K562 (cell line): ENCODE measurements at regions of chr7 and their contacts with region 1.

Region 1: GRCh38 chr7:6057316-6058129 is 26.3 kb downstream of the ANKRD61 start:
- DNase-seq: peak in 1 of 4 experiments; percentile 69
- ATAC-seq: peak; percentile 20
- H3K4me3 ChIP-seq: peak overlapping the region; percentile 86
- H3K27ac ChIP-seq: peak overlapping the region; percentile 94
- H3K4me1 ChIP-seq: peaks cover 6 to 21% of the 10 kb centered on the region in 2 experiments; a peak in 4 of 5 replicates
- H3K27me3 ChIP-seq: no peaks in the 10 kb centered on the region
- CTCF ChIP-seq: no peak
- EP300 ChIP-seq: no peak
- POLR2A ChIP-seq: no peak; the same call in 1 of the 2 replicates
- RAD21 ChIP-seq: no peak

Region 2: DNA sequence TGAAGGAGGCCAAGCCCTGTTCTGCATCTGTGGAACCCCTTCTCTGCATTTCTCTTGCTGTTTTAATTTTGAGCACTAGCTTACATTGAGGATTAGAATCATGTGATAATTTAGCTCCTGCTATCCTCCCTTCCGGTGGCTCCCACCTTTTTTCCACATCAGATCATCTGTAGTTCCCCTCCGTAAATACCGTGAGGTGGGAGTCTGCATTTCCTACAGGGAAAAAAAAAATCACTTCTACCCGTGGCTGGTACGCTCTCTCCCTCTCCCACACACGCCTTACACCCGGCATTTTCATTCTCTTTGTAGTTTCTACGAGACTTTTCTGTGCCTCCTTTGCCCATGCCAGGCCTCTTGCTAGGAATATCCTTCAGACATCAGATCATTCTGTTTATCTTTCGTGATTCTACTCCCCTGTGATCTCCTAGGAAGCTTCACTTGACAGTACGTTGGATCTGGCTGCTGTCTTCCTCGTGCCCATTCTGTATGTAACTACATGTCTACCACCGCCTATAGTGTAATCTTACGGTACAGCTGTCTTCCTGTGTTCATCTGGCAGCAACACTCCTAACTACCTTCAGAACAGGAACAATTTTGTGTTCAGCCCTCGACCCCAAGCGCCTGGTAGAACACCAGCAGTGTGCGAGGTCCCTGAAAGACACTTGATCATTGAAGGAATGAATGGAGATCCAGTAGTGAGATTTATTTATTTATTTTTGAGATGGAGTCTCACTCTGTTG is 218.6 kb before region 1 on chr7:
- CTCF ChIA-PET with region 1: no interaction called
- POLR2A ChIA-PET with region 1: no interaction called
- in situ Hi-C with region 1: no loop called
- intact Hi-C with region 1: no loop called
- DNase-seq: no peak
- ATAC-seq: peak; percentile 38
- H3K4me3 ChIP-seq: no peak overlapping the region
- H3K27ac ChIP-seq: no peak overlapping the region
- H3K4me1 ChIP-seq: peaks cover 0 to 7% of the 10 kb centered on the region in 2 experiments; a peak in 3 of 5 replicates
- H3K27me3 ChIP-seq: no peaks in the 10 kb centered on the region
- CTCF ChIP-seq: no peak
- EP300 ChIP-seq: no peak
- POLR2A ChIP-seq: no peak
- RAD21 ChIP-seq: no peak

Region 3: DNA sequence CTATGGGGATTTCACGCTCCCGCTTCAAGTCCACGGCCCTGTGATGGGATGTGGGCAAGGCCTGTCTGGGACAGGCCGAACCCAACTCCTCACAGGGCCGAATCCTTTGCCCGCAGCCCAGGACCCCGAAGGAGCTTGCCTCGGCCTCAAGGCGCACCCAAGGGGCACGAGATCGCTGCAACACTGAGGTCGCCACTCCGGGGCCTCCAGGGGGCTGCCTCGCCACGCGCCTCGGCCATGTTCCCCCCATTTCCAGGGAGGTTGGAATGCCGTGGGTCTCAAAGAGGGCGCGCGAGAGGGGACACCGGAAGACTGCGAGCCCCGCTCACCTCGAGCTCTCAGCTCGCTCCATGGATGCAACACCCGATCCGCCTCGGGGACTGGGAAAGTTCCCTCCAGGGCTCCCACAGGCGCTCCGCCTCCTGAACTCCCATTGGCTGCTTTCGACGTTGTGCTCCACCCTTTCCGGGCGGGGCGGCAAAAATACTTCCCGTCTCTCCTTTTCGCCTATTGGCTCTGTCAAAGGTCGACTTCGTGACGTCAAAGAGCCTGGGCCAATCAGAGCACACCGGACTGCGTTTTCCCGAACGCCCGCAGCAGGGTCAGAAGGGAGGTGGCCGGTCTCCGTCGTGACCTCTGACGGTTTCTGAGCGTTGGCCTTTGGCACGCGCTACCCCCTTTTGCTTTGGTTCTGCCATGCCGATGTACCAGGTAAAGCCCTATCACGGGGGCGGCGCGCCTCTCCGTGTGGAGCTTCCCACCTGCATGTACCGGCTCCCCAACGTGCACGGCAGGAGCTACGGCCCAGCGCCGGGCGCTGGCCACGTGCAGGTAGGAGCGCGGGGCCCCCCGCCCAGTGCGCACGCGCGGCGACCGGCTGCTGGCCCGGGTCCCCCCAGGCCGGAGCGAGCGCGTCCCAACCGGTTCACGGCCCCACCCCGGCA is 48.6 kb before region 1 on chr7 and contains the starts of genes AIMP2 and PMS2:
- CTCF ChIA-PET with region 1: no interaction called
- POLR2A ChIA-PET with region 1: interaction called, 8 read pairs
- in situ Hi-C with region 1: no loop called
- intact Hi-C with region 1: loop called (anchors 2 kb)
- DNase-seq: peak; percentile 94 to 98 (median 96)
- ATAC-seq: peak; percentile 92
- H3K4me3 ChIP-seq: peak within 1 kb of the TSS; percentile 65
- H3K27ac ChIP-seq: peak within 1 kb of the TSS; percentile 99
- H3K4me1 ChIP-seq: peaks cover 12 to 15% of the 10 kb centered on the region in 2 experiments; a peak in 4 of 5 replicates
- H3K27me3 ChIP-seq: no peaks in the 10 kb centered on the region
- CTCF ChIP-seq: peak; percentile 20 to 37 (median 22); a peak in 4 of 6 replicates
- EP300 ChIP-seq: no peak
- POLR2A ChIP-seq: peak; percentile 96
- RAD21 ChIP-seq: peak; percentile 27 to 29; a peak in 3 of 4 replicates
- polyA plus RNA-seq, gene AIMP2: 47.5 to 63.5 TPM
- polyA plus RNA-seq, gene PMS2: 4.9 to 6.5 TPM

Region 4: DNA sequence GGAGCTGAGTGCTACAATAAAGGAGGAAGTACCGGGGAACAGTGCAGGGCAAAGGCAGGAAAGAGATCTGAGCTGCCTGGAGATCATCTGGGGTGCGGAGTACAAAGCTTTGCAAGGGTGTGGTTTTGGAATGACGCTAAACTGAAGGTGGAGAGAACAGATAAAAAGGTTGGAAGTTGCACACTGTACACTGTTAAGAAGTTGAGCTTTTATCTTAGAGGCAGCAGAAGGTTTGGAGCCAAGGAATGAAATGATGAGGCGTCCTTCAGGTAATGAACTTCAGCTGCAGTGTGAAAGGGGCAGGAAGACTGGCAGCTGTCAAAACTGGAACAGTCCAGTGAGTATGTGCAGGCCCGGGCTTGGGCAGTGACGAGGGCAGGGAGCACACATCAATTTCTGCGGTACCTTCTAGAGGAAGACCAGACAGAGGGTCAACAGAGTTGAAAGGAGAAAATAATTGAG is 33.5 kb before region 1 on chr7:
- CTCF ChIA-PET with region 1: no interaction called
- POLR2A ChIA-PET with region 1: interaction called, 15 read pairs
- in situ Hi-C with region 1: no loop called
- intact Hi-C with region 1: loop called (anchors 1 kb)
- DNase-seq: peak; percentile 43 to 93 (median 64)
- ATAC-seq: peak; percentile 86
- H3K4me3 ChIP-seq: no peak overlapping the region
- H3K27ac ChIP-seq: peak overlapping the region; percentile 74
- H3K4me1 ChIP-seq: peaks cover 33 to 34% of the 10 kb centered on the region in 2 experiments; a peak in 4 of 5 replicates
- H3K27me3 ChIP-seq: no peaks in the 10 kb centered on the region
- CTCF ChIP-seq: no peak
- EP300 ChIP-seq: peak; percentile 97
- POLR2A ChIP-seq: 0 out of 2 replicates have a peak, but pooled peaks have one; percentile 20
- RAD21 ChIP-seq: no peak